ENCODE measurements at regions of chr11 and their contacts with region 1.

Region 1: GRCh38 chr11:124837491-124837856 is 27.8 kb upstream of the ROBO3 start:
- DNase-seq: no peak
- ATAC-seq: peak; percentile 46
- H3K4me3 Mint-ChIP-seq: no peak overlapping the region
- H3K27ac Mint-ChIP-seq: no peak overlapping the region
- H3K4me1 Mint-ChIP-seq: peaks cover 18% of the 10 kb centered on the region
- H3K27me3 Mint-ChIP-seq: peaks cover 73% of the 10 kb centered on the region

Region 2: GRCh38 chr11:124673333-124674167 is 163.9 kb before region 1 on chr11 and contains the starts of genes SIAE and SPA17:
- CTCF ChIA-PET with region 1: interaction called, 78 read pairs
- DNase-seq: peak; percentile 93
- ATAC-seq: peak; percentile 95
- H3K4me3 Mint-ChIP-seq: peak within 1 kb of the TSS; percentile 84
- H3K27ac Mint-ChIP-seq: peak within 1 kb of the TSS; percentile 89
- H3K4me1 Mint-ChIP-seq: peaks cover 37% of the 10 kb centered on the region
- H3K27me3 Mint-ChIP-seq: no peaks in the 10 kb centered on the region
- total RNA-seq, gene SIAE: 3.8 to 4.1 TPM
- total RNA-seq, gene SPA17: 2.4 to 2.9 TPM

Region 3: DNA sequence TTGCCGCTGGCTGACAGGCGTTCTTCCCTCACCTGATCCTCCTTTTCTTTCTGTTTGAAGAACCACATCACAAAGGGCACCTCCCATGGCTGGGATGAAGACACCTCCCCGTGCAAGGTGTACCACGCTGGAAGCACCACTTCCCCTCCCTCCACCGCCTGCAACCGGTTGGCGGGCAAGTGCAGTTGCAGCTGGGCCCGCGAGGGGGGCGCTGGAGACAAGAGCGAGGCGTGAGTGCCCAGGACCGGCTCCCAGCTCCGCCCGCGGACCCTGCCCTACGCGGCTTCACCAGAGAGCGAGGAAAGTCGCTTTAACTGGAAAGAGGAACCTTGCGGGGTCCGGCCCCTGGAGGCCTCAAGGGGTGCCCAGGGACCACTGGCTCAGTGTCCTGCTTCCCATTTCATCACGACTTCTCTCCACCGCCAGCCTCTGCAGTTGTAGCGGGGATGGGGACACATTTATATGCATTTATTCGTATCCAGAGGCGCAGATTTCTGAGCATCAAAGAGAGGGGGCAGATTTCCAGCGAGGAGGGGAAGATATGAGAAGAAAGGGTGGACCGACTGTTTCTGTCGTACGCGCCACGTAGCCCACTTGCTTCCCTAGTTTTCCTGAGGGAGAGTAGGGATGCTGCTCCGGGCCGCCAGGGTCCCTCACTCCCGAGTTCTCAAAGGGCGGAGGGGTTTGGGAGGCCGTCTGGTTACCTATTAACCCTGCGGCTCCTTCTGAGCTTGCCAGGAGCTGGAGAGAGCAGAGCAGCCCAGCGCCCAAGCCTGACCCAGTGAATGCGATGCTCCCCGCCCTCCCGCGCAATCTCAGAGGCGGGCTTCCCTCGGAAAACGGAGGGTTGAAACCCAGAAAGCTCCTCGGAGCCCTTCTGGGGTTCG is 78.9 kb before region 1 on chr11:
- CTCF ChIA-PET with region 1: interaction called, 28 read pairs
- DNase-seq: peak; percentile 82
- ATAC-seq: peak; percentile 64
- H3K4me3 Mint-ChIP-seq: no peak overlapping the region
- H3K27ac Mint-ChIP-seq: no peak overlapping the region
- H3K4me1 Mint-ChIP-seq: peaks cover 19% of the 10 kb centered on the region
- H3K27me3 Mint-ChIP-seq: peaks cover 53% of the 10 kb centered on the region

Region 4: GRCh38 chr11:124800226-124800929 is 37.1 kb before region 1 on chr11 and contains the start of gene MSANTD2:
- CTCF ChIA-PET with region 1: interaction called, 45 read pairs
- DNase-seq: peak; percentile 86
- ATAC-seq: peak; percentile 91
- H3K4me3 Mint-ChIP-seq: peak within 1 kb of the TSS; percentile 82
- H3K27ac Mint-ChIP-seq: peak within 1 kb of the TSS; percentile 90
- H3K4me1 Mint-ChIP-seq: peaks cover 25% of the 10 kb centered on the region
- H3K27me3 Mint-ChIP-seq: peaks cover 2% of the 10 kb centered on the region
- total RNA-seq, gene MSANTD2: 8.5 to 10.2 TPM

Region 5: DNA sequence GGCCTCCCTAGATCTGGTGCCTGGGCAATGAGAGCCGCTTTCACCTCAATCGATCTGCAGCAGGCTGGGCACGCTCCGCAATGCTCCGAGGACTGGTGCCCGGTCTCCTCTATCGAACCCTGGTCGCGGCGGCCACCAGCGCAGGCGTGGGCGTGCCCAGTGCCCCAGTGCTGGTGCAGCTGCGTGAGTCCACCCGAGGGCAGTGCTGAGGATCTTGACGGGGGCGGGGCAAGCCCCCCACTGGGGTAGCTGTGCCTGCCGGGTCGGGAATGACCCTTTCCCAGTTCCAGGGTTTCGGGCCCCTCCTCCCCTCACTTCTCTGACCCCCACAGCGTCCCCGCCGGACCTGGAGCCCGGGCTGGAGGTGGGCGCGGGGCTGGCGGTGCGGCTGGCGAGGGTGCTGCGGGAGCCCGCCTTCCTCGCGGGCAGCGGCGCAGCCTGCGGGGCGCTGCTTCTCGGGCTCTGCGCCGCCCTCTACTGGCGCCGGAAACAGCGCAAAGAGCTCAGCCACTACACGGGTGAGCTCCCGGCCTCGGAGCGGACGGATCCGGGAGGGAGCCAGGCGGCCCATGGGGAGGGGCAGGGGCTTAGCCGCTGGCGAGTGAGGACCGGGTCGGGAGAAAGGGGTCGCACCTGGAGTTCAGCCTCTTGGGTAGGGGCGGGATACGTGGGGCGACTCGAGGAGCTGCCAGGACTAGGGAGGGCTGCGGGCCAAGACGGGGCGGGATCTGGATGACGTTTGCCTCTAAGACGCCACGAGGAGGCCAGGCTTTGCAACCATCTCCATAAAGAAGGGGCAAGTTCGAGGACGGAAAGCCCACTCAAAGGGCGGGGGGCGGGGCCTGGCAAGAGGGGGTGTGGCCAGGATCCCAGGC is 38.7 kb after region 1 on chr11:
- CTCF ChIA-PET with region 1: interaction called, 31 read pairs
- DNase-seq: peak; percentile 87
- ATAC-seq: peak; percentile 96
- H3K4me3 Mint-ChIP-seq: peak overlapping the region; percentile 77
- H3K27ac Mint-ChIP-seq: peak overlapping the region; percentile 85
- H3K4me1 Mint-ChIP-seq: peaks cover 15% of the 10 kb centered on the region
- H3K27me3 Mint-ChIP-seq: peaks cover 31% of the 10 kb centered on the region